ENCODE measurements at regions of chr10 and their contacts with region 1.

Region 1: GRCh38 chr10:104121520-104122224 is at the start of gene SFR1:
- DNase-seq: peak; percentile 94
- H3K4me3 ChIP-seq: peak within 1 kb of the TSS; percentile 90
- H3K27ac ChIP-seq: peak within 1 kb of the TSS; percentile 99
- H3K27me3 ChIP-seq: no peaks in the 10 kb centered on the region
- CTCF ChIP-seq: peak; percentile 62
- polyA plus RNA-seq, gene SFR1: 2.6 and 3.9 TPM in 2 replicates

Region 2: GRCh38 chr10:103983367-103983911 is 138.2 kb before region 1 on chr10:
- CTCF ChIA-PET with region 1: interaction called, 10 read pairs
- POLR2A ChIA-PET with region 1: no interaction called
- DNase-seq: no peak
- H3K4me3 ChIP-seq: no peak overlapping the region
- H3K27ac ChIP-seq: no peak overlapping the region
- H3K27me3 ChIP-seq: no peaks in the 10 kb centered on the region
- CTCF ChIP-seq: no peak

Region 3: DNA sequence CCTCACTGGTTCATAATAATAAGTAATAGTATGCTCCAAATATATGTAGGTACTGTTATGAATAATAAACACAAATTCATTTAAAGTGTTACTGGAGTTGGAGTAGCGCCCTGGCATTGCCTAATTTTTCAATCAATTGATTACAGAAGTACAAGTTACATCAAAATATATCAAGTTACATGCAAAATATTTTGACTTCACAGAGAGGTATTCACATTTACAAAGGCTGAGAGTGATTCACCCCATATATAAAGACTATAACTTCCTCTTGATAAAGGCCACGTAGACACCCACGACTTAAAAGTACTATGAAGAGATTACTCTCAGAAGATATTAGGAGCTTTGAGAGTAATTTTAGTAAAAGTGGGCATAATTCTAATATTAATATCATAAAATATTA is 22.4 kb before region 1 on chr10:
- CTCF ChIA-PET with region 1: interaction called, 26 read pairs
- POLR2A ChIA-PET with region 1: no interaction called
- DNase-seq: no peak
- H3K4me3 ChIP-seq: no peak overlapping the region
- H3K27ac ChIP-seq: no peak overlapping the region
- H3K27me3 ChIP-seq: no peaks in the 10 kb centered on the region
- CTCF ChIP-seq: no peak

Region 4: GRCh38 chr10:104104926-104105325 is 16.7 kb before region 1 on chr10:
- CTCF ChIA-PET with region 1: interaction called, 46 read pairs
- POLR2A ChIA-PET with region 1: interaction called, 13 read pairs
- DNase-seq: no peak
- H3K4me3 ChIP-seq: no peak overlapping the region
- H3K27ac ChIP-seq: no peak overlapping the region
- H3K27me3 ChIP-seq: no peaks in the 10 kb centered on the region
- CTCF ChIP-seq: no peak

Region 5: GRCh38 chr10:104109908-104110662 is 11.6 kb before region 1 on chr10:
- CTCF ChIA-PET with region 1: interaction called, 46 read pairs
- POLR2A ChIA-PET with region 1: interaction called, 13 read pairs
- DNase-seq: no peak
- H3K4me3 ChIP-seq: no peak overlapping the region
- H3K27ac ChIP-seq: no peak overlapping the region
- H3K27me3 ChIP-seq: no peaks in the 10 kb centered on the region
- CTCF ChIP-seq: no peak

Region 6: DNA sequence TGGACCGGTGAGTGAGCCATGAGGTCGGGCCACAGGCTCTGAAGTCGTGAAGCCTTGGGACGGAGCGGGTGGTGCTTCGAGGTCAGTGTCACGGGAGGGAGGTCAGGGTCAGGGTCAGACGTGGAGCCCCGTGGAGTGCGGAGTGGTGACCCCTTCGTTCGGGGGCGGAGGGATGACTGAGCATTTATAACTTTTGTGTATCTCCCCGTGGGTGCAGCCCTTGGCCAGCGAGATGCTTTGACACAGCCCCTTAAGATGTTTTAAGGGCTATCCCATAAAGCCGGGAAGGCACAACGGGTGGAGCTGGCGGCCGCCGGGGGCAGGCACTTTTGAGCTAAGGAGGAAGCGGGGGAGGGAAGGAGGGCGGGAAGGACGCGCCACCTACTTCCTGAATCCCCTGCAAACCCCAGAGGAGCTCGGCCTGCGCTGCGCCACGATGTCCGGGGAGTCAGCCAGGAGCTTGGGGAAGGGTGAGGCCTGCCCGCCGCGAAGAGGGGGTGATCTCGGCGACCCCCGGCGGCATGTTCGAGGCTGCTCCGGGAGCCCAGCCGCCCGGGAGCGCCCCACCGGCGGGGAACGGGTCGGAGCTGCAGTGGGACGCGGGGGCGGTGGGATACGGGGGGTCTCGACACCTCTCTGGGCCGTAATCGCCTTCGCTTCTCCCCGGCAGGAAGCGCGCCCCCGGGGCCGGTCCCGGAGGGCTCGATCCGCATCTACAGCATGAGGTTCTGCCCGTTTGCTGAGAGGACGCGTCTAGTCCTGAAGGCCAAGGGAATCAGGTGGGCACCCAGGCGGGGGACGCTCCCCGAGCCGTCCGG is 133.0 kb after region 1 on chr10 and contains the start of gene GSTO1:
- CTCF ChIA-PET with region 1: interaction called, 10 read pairs
- POLR2A ChIA-PET with region 1: interaction called, 6 read pairs
- DNase-seq: peak; percentile 46
- H3K4me3 ChIP-seq: peak within 1 kb of the TSS; percentile 85
- H3K27ac ChIP-seq: peak within 1 kb of the TSS; percentile 95
- H3K27me3 ChIP-seq: no peaks in the 10 kb centered on the region
- CTCF ChIP-seq: 0 out of 2 replicates have a peak, but pooled peaks have one; percentile 2
- polyA plus RNA-seq, gene GSTO1: 185 and 227 TPM in 2 replicates